ENCODE measurements at regions of chr10 and their contacts with region 1.

Region 1: GRCh38 chr10:29496341-29497162 is 138.2 kb downstream of the SVIL start:
- DNase-seq: peak; percentile 38
- ATAC-seq: no peak
- H3K4me3 ChIP-seq: no peak overlapping the region
- H3K4me3 Mint-ChIP-seq: no peak overlapping the region
- H3K27ac ChIP-seq: no peak overlapping the region
- H3K27ac Mint-ChIP-seq: no peak overlapping the region
- H3K4me1 ChIP-seq: no peaks in the 10 kb centered on the region
- H3K4me1 Mint-ChIP-seq: no peaks in the 10 kb centered on the region
- H3K27me3 ChIP-seq: no peaks in the 10 kb centered on the region
- H3K27me3 Mint-ChIP-seq: peaks cover 13% of the 10 kb centered on the region
- CTCF ChIP-seq: peak; percentile 83

Region 2: GRCh38 chr10:29522061-29522855 is 25.7 kb after region 1 on chr10:
- CTCF ChIA-PET with region 1: no interaction called
- POLR2A ChIA-PET with region 1: interaction called, 13 read pairs
- intact Hi-C with region 1: no loop called
- DNase-seq: no peak
- ATAC-seq: no peak
- H3K4me3 ChIP-seq: no peak overlapping the region
- H3K4me3 Mint-ChIP-seq: no peak overlapping the region
- H3K27ac ChIP-seq: no peak overlapping the region
- H3K27ac Mint-ChIP-seq: no peak overlapping the region
- H3K4me1 ChIP-seq: no peaks in the 10 kb centered on the region
- H3K4me1 Mint-ChIP-seq: no peaks in the 10 kb centered on the region
- H3K27me3 ChIP-seq: no peaks in the 10 kb centered on the region
- H3K27me3 Mint-ChIP-seq: no peaks in the 10 kb centered on the region
- CTCF ChIP-seq: no peak

Measured in B cell (primary cell).